PC-9 (cell line): ENCODE measurements at regions of chr12 and their contacts with region 1.

Region 1: GRCh38 chr12:42756841-42757661 is 167.5 kb upstream of the PRICKLE1 start:
- DNase-seq: peak; percentile 81 to 98
- H3K4me3 ChIP-seq: peak overlapping the region; percentile 16; the same call in 1 of the 2 replicates
- H3K27ac ChIP-seq: peak overlapping the region; percentile 80
- H3K4me1 ChIP-seq: peaks cover 61% of the 10 kb centered on the region
- H3K27me3 ChIP-seq: no peaks in the 10 kb centered on the region
- CTCF ChIP-seq: no peak

Region 2: DNA sequence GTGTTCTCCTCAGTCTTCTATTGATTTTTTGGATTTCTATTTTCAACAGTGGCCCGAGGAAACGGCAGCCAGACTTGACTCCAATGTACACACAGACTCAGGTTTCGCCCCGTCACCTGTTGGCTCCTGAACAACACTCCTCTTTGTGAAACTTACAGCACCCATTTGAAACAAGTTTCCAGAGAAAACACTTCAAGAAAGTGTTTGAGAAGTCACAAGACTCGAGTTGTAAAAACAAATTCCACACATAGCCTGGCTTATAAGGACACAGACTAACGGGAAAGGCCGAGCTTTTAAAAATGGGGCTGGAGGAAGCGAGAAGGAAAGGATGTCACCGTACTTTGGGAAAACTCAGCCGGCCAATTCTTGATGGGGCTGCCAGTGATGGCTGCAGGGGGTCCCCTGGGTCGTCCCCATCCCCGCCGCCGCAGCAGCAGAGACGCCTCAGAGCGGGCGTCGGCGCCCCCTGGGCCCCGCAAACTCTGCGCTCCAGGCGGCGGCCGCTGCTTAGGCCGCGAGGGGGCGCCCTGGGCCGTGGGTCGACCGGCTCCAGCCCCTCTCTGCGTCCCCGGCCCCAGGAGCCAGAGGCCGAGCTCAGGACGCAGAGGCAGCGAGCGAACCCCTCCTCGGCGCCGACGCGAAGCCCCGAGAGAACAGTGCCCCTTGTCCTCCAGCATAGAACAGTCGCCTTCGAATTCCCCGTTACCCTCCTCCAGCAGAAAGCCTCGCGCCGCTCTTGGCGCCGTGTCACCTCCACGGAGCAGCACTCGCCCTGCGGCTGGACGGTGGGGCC is 274.4 kb before region 1 on chr12:
- CTCF ChIA-PET with region 1: no interaction called
- POLR2A ChIA-PET with region 1: no interaction called
- intact Hi-C with region 1: loop called (anchors 5 kb)
- DNase-seq: peak in 1 of 2 experiments; percentile 76
- H3K4me3 ChIP-seq: peak overlapping the region; percentile 92
- H3K27ac ChIP-seq: no peak overlapping the region
- H3K4me1 ChIP-seq: peaks cover 8% of the 10 kb centered on the region; the same call in 1 of the 2 replicates
- H3K27me3 ChIP-seq: no peaks in the 10 kb centered on the region
- CTCF ChIP-seq: peak; percentile 85

Region 3: GRCh38 chr12:42589465-42590329 is 167.4 kb before region 1 on chr12 and contains the start of gene PRICKLE1:
- CTCF ChIA-PET with region 1: interaction called, 7 read pairs
- POLR2A ChIA-PET with region 1: no interaction called
- intact Hi-C with region 1: loop called (anchors 5 kb)
- DNase-seq: peak; percentile 36 to 56
- H3K4me3 ChIP-seq: peak within 1 kb of the TSS; percentile 89
- H3K27ac ChIP-seq: no peak within 1 kb of the TSS
- H3K4me1 ChIP-seq: peaks cover 13% of the 10 kb centered on the region; the same call in 1 of the 2 replicates
- H3K27me3 ChIP-seq: no peaks in the 10 kb centered on the region
- CTCF ChIP-seq: no peak
- total RNA-seq, gene PRICKLE1: 6.7 and 7.0 TPM in 2 replicates

Region 4: GRCh38 chr12:42617622-42618021 is 139.4 kb before region 1 on chr12:
- CTCF ChIA-PET with region 1: no interaction called
- POLR2A ChIA-PET with region 1: no interaction called
- intact Hi-C with region 1: no loop called
- DNase-seq: no peak
- H3K4me3 ChIP-seq: no peak overlapping the region
- H3K27ac ChIP-seq: no peak overlapping the region
- H3K4me1 ChIP-seq: no peaks in the 10 kb centered on the region
- H3K27me3 ChIP-seq: no peaks in the 10 kb centered on the region
- CTCF ChIP-seq: no peak

Region 5: GRCh38 chr12:42744539-42745156 is 12.4 kb before region 1 on chr12:
- CTCF ChIA-PET with region 1: interaction called, 3 read pairs
- POLR2A ChIA-PET with region 1: no interaction called
- intact Hi-C with region 1: loop called (anchors 1 kb)
- DNase-seq: peak; percentile 49 to 90
- H3K4me3 ChIP-seq: no peak overlapping the region
- H3K27ac ChIP-seq: peak overlapping the region; percentile 35; the same call in 1 of the 2 replicates
- H3K4me1 ChIP-seq: peaks cover 27% of the 10 kb centered on the region
- H3K27me3 ChIP-seq: no peaks in the 10 kb centered on the region
- CTCF ChIP-seq: no peak

Region 6: GRCh38 chr12:42790761-42791151 is 33.7 kb after region 1 on chr12:
- CTCF ChIA-PET with region 1: interaction called, 3 read pairs
- POLR2A ChIA-PET with region 1: interaction called, 7 read pairs
- intact Hi-C with region 1: loop called (anchors 2 kb)
- DNase-seq: peak; percentile 48 to 76
- H3K4me3 ChIP-seq: no peak overlapping the region
- H3K27ac ChIP-seq: peak overlapping the region; percentile 13; the same call in 1 of the 2 replicates
- H3K4me1 ChIP-seq: peaks cover 18% of the 10 kb centered on the region
- H3K27me3 ChIP-seq: no peaks in the 10 kb centered on the region
- CTCF ChIP-seq: no peak

Region 7: GRCh38 chr12:42961395-42961794 is 204.3 kb after region 1 on chr12:
- CTCF ChIA-PET with region 1: interaction called, 7 read pairs
- POLR2A ChIA-PET with region 1: no interaction called
- intact Hi-C with region 1: loop called (anchors 1 kb)
- DNase-seq: peak; percentile 63 to 99
- H3K4me3 ChIP-seq: no peak overlapping the region
- H3K27ac ChIP-seq: peak overlapping the region; percentile 91
- H3K4me1 ChIP-seq: peaks cover 38% of the 10 kb centered on the region
- H3K27me3 ChIP-seq: no peaks in the 10 kb centered on the region
- CTCF ChIP-seq: no peak